Psoas muscle (tissue), 8 donors: ENCODE measurements at regions of chr20 and their contacts with region 1.

Region 1: GRCh38 chr20:23350196-23350903 is at the start of gene NXT1:
- DNase-seq: peak; percentile 97
- ATAC-seq: peak; percentile 93 to 94 (median 93)
- H3K4me3 ChIP-seq: peak within 1 kb of the TSS; percentile 91
- H3K27ac ChIP-seq: peak within 1 kb of the TSS; percentile 99
- H3K4me1 ChIP-seq: peaks cover 13% of the 10 kb centered on the region
- H3K27me3 ChIP-seq: no peaks in the 10 kb centered on the region
- CTCF ChIP-seq: no peak
- total RNA-seq, gene NXT1: 6.7 to 18.9 (median 11.1) TPM

Region 2: GRCh38 chr20:23420943-23421931 is 70.9 kb after region 1 on chr20 and contains the start of gene NAPB:
- intact Hi-C with region 1: loop called (anchors 5 to 10 kb)
- DNase-seq: peak; percentile 96 to 97
- ATAC-seq: peak; percentile 98 to 100 (median 99)
- H3K4me3 ChIP-seq: peak within 1 kb of the TSS; percentile 92
- H3K27ac ChIP-seq: peak within 1 kb of the TSS; percentile 93
- H3K4me1 ChIP-seq: peaks cover 34% of the 10 kb centered on the region
- H3K27me3 ChIP-seq: no peaks in the 10 kb centered on the region
- CTCF ChIP-seq: peak; percentile 61
- total RNA-seq, gene NAPB: 2.5 to 5.0 (median 3.5) TPM

Region 3: GRCh38 chr20:23541330-23541729 is 191.0 kb after region 1 on chr20:
- intact Hi-C with region 1: no loop called
- DNase-seq: no peak
- ATAC-seq: no peak
- H3K4me3 ChIP-seq: no peak overlapping the region
- H3K27ac ChIP-seq: no peak overlapping the region
- H3K4me1 ChIP-seq: no peaks in the 10 kb centered on the region
- H3K27me3 ChIP-seq: peaks cover 0 to 4% (median 3%) of the 10 kb centered on the region in 3 donors
- CTCF ChIP-seq: no peak